Colonic mucosa (tissue), 4 donors: ENCODE measurements at regions of chr3 and their contacts with region 1.

Region 1: GRCh38 chr3:105686278-105686897 is 182.4 kb downstream of the CBLB start:
- DNase-seq: no peak
- H3K4me3 ChIP-seq: no peak overlapping the region
- H3K27ac ChIP-seq: no peak overlapping the region
- H3K4me1 ChIP-seq: no peaks in the 10 kb centered on the region
- H3K27me3 ChIP-seq: no peaks in the 10 kb centered on the region
- CTCF ChIP-seq: peak; percentile 73

Region 2: DNA sequence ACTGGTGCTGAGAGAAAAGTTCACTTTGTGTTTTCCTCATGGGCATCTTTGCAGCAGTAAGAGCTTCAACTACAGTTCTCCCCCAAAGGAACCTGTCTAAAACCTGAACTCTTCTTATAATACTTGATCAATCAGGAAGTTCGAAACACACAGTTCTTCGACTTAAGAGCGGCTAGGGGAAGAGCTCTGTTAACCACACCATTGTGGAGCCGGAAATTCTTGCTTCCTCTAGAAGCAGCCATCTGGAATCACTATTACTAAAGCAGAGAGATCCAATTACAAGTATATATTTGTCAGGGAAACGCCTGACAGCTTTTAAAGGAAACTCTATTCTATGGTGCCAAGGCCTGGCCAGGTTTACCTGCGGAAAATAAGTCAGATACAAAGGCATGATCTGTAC is 519.8 kb after region 1 on chr3:
- intact Hi-C with region 1: no loop called
- DNase-seq: no peak
- H3K4me3 ChIP-seq: no peak overlapping the region
- H3K27ac ChIP-seq: no peak overlapping the region
- H3K4me1 ChIP-seq: no peaks in the 10 kb centered on the region
- H3K27me3 ChIP-seq: no peaks in the 10 kb centered on the region
- CTCF ChIP-seq: no peak

Region 3: DNA sequence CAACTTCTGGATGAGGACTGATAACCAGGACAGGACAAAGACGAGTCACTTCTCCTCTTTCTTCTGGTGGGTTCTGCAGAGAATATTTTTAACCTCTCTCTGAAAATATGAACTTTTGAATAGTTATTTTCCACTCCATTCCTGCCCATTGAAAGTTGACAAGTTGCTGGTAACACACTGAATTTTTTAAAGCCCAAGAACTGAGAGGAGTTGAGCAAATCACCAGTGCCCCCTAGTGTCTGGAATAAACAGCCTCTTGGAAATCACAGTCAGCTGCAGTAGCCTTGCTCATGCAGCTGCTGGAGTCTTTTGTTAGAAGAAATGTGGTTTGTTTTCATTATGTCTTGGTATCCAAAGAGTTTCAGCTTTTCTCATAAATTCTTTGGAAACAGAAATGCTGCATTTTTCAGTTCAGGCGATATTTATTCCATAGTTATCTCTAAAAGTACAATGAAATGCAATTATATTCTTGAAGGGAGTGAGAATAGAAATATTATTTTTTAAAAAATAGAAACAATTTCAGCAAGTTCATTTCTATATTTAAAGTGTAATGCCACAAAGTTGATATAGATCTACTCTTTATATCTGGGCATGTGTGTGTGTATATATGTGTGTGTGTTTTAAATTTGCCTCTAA is 923.4 kb after region 1 on chr3:
- intact Hi-C with region 1: loop called (anchors 5 kb)
- DNase-seq: peak; percentile 60
- H3K4me3 ChIP-seq: no peak overlapping the region
- H3K27ac ChIP-seq: no peak overlapping the region
- H3K4me1 ChIP-seq: no peaks in the 10 kb centered on the region
- H3K27me3 ChIP-seq: no peaks in the 10 kb centered on the region
- CTCF ChIP-seq: peak; percentile 82